ENCODE measurements at regions of chr7 and their contacts with region 1.

Region 1: GRCh38 chr7:20219446-20220292 is 2.5 kb upstream of the MACC1 start:
- H3K4me3 Mint-ChIP-seq: no peak overlapping the region
- H3K27ac Mint-ChIP-seq: peak overlapping the region; percentile 91
- H3K4me1 Mint-ChIP-seq: peaks cover 55% of the 10 kb centered on the region
- H3K27me3 Mint-ChIP-seq: no peaks in the 10 kb centered on the region

Region 2: GRCh38 chr7:20201380-20201779 is 18.3 kb before region 1 on chr7:
- intact Hi-C with region 1: loop called (anchors 2 kb)
- H3K4me3 Mint-ChIP-seq: no peak overlapping the region
- H3K27ac Mint-ChIP-seq: peak overlapping the region; percentile 52
- H3K4me1 Mint-ChIP-seq: peaks cover 37% of the 10 kb centered on the region
- H3K27me3 Mint-ChIP-seq: no peaks in the 10 kb centered on the region

Region 3: DNA sequence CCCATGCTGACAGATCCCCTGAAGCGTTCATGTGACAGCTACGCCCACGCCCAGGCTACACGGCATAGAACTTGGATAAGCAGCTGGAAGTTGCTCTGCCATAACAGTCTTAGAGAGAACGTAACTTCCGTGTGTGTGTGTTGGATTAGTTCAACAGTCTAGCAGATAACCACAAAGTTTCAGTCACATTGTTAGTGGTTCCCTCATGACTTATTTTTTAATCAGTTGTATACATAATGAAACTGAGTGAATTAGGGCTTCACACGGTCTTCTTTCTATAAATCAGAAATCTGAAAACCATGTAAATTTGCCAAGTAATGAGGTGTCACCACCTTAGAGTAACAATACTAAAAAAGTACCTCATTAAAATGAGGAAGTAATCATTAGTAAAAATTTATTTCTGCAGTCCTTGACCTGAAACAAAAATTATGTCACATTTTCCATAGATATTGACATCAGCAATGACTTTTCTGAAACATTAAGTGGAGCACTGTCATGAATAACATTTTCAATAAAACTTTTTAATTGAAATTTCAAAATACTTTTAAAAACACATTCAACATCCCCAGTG is 19.2 kb after region 1 on chr7:
- intact Hi-C with region 1: loop called (anchors 1 kb)
- H3K4me3 Mint-ChIP-seq: no peak overlapping the region
- H3K27ac Mint-ChIP-seq: peak overlapping the region; percentile 68
- H3K4me1 Mint-ChIP-seq: peaks cover 28% of the 10 kb centered on the region
- H3K27me3 Mint-ChIP-seq: peaks cover 4% of the 10 kb centered on the region

Region 4: GRCh38 chr7:20280475-20281351 is 61.0 kb after region 1 on chr7:
- intact Hi-C with region 1: no loop called
- H3K4me3 Mint-ChIP-seq: no peak overlapping the region
- H3K27ac Mint-ChIP-seq: no peak overlapping the region
- H3K4me1 Mint-ChIP-seq: no peaks in the 10 kb centered on the region
- H3K27me3 Mint-ChIP-seq: no peaks in the 10 kb centered on the region

Region 5: GRCh38 chr7:20299647-20300312 is 80.1 kb after region 1 on chr7:
- intact Hi-C with region 1: loop called (anchors 5 kb)
- H3K4me3 Mint-ChIP-seq: no peak overlapping the region
- H3K27ac Mint-ChIP-seq: no peak overlapping the region
- H3K4me1 Mint-ChIP-seq: peaks cover 26% of the 10 kb centered on the region
- H3K27me3 Mint-ChIP-seq: no peaks in the 10 kb centered on the region

Region 6: DNA sequence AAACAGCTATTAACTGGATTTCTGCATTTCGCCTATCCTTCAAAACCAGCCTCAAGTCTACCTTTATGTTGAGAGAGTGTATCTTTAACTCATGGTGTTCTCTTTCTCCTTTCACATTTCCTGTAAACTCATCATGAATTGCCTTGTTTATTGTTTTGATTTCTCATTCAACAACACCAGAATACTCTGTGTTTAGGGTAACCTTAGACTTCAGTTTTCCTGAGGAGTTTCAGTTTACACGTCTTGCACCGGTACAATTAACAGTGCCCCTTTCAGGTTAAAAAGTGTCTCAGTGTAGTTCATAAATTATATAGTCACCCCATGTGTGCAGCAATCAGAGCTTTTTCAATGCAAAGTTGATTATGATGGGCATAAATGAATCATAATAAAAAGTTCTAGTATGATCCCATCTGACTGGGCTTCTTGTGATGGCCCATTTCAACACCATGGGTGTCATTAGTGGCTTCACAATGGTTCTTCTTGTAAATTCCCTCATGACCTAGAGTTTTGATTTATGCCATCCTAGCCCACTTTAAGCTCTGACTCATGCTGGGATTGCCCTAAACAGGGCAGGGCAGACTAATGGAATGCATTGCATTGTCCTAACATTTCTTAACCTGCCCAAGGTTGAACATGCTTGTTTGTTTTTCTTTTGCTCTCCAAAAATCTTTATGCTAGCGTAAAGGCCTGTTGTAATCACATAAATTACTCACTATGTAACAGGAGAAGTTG is 133.1 kb after region 1 on chr7:
- intact Hi-C with region 1: no loop called
- H3K4me3 Mint-ChIP-seq: no peak overlapping the region
- H3K27ac Mint-ChIP-seq: no peak overlapping the region
- H3K4me1 Mint-ChIP-seq: peaks cover 7% of the 10 kb centered on the region
- H3K27me3 Mint-ChIP-seq: no peaks in the 10 kb centered on the region

Region 7: DNA sequence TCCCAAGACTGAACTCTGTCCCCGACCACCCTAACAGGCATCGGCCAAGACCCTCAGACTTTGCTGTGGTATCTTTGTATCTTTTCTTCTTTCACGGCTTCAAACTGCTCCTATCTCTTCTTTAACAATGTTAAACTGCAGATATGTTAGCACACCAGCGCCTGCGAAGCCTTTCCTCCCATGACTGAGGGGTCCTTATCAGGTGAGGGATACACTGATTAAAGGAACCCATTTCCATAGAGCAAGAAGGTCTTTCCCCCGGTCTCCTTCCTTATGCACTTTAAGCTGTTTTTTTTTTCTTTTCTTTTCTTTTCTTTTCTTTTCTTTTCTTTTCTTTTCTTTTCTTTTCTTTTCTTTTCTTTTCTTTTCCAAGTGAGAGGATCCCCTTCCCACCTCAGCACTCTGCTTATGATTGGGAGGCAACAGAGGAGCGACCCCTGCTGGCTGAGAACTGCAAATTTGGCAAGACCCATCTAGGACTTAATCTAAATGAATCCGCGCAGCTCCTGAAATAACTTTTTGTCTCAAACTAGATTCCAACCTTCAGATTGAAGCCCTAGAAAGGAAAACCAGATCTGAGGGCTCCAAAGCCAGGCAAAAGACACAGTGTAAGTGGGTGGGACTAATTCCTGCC is 220.9 kb after region 1 on chr7:
- intact Hi-C with region 1: loop called (anchors 10 kb)
- H3K4me3 Mint-ChIP-seq: no peak overlapping the region
- H3K27ac Mint-ChIP-seq: peak overlapping the region; percentile 1
- H3K4me1 Mint-ChIP-seq: peaks cover 55% of the 10 kb centered on the region
- H3K27me3 Mint-ChIP-seq: peaks cover 8% of the 10 kb centered on the region